A673 (cell line): ENCODE measurements at regions of chr1 and their contacts with region 1.

Region 1: GRCh38 chr1:77081834-77082233 is 137.4 kb downstream of the PIGK start:
- DNase-seq: no peak
- H3K4me3 ChIP-seq: no peak overlapping the region
- H3K27ac ChIP-seq: no peak overlapping the region
- H3K4me1 ChIP-seq: no peaks in the 10 kb centered on the region
- H3K27me3 ChIP-seq: no peaks in the 10 kb centered on the region
- CTCF ChIP-seq: no peak

Region 2: GRCh38 chr1:76162254-76162653 is 919.6 kb before region 1 on chr1:
- CTCF ChIA-PET with region 1: interaction called, 12 read pairs
- POLR2A ChIA-PET with region 1: no interaction called
- intact Hi-C with region 1: no loop called
- DNase-seq: no peak
- H3K4me3 ChIP-seq: no peak overlapping the region
- H3K27ac ChIP-seq: no peak overlapping the region
- H3K4me1 ChIP-seq: no peaks in the 10 kb centered on the region
- H3K27me3 ChIP-seq: no peaks in the 10 kb centered on the region
- CTCF ChIP-seq: no peak

Region 3: GRCh38 chr1:77170687-77171086 is 88.9 kb after region 1 on chr1:
- CTCF ChIA-PET with region 1: no interaction called
- POLR2A ChIA-PET with region 1: no interaction called
- intact Hi-C with region 1: no loop called
- DNase-seq: no peak
- H3K4me3 ChIP-seq: no peak overlapping the region
- H3K27ac ChIP-seq: no peak overlapping the region
- H3K4me1 ChIP-seq: no peaks in the 10 kb centered on the region
- H3K27me3 ChIP-seq: no peaks in the 10 kb centered on the region
- CTCF ChIP-seq: no peak

Region 4: DNA sequence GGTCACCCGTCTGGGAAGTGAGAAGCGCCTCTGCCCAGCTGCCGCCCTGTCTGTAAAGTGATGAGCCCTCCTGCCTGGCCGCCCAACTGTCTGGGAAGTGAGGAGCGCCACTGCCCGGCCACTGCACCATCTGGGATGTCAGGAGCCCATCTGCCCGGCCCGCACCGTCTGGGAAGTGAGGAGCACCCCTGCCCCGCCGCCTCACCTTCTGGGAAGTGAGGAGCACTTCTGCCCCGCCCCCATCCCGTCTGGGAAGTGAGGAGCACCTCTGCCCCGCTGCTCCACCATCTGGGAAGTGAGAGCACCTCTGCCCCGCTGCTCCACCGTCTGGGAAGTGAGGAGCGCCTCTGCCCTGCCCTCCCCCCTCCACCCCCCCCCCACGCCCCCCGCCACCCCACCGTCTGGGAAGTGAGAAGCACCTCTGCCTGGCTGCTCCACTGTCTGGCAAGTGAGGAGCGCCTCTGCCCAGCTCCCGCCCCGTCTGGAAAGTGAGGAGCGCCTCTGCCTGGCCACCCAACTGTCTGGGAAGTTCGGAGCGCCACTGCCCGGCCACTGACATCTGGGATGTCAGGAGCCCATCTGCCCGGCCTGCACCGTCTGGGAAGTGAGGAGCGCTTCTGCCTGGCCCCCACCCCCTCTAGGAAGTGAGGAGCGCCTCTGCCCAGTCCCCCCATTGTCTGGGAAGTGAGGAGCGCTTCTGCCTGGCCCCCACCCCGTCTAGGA is 605.1 kb after region 1 on chr1:
- CTCF ChIA-PET with region 1: no interaction called
- POLR2A ChIA-PET with region 1: no interaction called
- intact Hi-C with region 1: no loop called
- DNase-seq: no peak
- H3K4me3 ChIP-seq: no peak overlapping the region
- H3K27ac ChIP-seq: no peak overlapping the region
- H3K4me1 ChIP-seq: peaks cover 12% of the 10 kb centered on the region
- H3K27me3 ChIP-seq: no peaks in the 10 kb centered on the region
- CTCF ChIP-seq: no peak